Dendritic cell treated with granulocyte-macrophage colony-stimulating factor and Interleukin-4, amounts not matched to agents 40 ng/mL and 50 ng/mL, for 4 days (primary cell): ENCODE measurements at regions of chr12 and their contacts with region 1.

Region 1: GRCh38 chr12:85949253-85949652 is 75.2 kb downstream of the NTS start:
- H3K4me3 Mint-ChIP-seq: no peak overlapping the region
- H3K27ac Mint-ChIP-seq: no peak overlapping the region
- H3K4me1 Mint-ChIP-seq: peaks cover 3% of the 10 kb centered on the region
- H3K27me3 Mint-ChIP-seq: no peaks in the 10 kb centered on the region

Region 2: DNA sequence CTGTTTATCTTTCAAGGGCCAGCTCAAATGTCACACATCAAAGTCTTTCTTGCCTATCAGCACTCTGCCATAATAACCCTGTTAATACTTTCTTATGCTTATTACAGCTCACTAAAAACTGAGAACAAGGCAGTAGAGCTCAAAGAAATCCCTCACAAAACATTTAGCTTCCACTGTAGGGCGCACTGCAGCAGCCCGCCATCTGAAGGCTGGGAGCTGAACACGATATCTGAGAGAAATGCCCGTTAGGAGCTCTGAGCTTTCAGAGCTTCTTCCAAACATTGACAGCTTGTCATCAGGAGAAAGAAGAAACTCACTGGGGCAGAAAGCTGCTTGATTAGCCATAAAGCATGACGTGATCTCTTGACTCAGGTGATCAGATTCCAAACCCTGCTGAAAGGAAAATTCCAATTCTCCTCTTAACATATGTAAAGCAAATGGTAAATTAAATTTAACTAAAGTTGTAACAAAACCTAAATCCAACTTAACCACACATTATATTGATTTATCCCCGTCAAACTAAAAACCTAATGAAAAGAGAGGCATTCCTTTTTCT is 1904.3 kb after region 1 on chr12:
- intact Hi-C with region 1: loop called (anchors 10 kb)
- H3K4me3 Mint-ChIP-seq: no peak overlapping the region
- H3K27ac Mint-ChIP-seq: no peak overlapping the region
- H3K4me1 Mint-ChIP-seq: no peaks in the 10 kb centered on the region
- H3K27me3 Mint-ChIP-seq: no peaks in the 10 kb centered on the region